CD4-positive, alpha-beta memory T cell (primary cell): ENCODE measurements at regions of chr6 and their contacts with region 1.

Region 1: DNA sequence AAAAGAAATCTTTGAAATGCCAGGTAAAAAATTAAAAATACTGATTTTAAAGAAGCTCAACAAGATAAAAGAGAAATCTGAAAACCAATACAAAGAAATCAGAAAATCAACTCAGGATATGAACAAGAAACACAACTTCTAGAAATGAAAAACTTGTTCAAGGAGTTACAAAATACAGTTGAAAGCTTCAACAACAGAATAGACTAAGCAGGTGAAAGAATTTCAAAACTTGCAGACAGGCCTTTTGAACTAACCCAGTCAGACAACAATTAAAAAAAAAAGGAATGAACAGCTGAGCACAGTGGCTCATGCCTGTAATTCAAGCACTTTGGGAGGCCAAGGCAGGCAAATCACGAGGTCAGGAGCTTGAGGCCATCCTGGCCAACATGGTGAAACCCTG is 57.8 kb downstream of the PDSS2 start:
- DNase-seq: no peak
- H3K4me3 ChIP-seq: no peak overlapping the region
- H3K4me3 Mint-ChIP-seq: no peak overlapping the region
- H3K27ac ChIP-seq: no peak overlapping the region
- H3K27ac Mint-ChIP-seq: no peak overlapping the region
- H3K4me1 ChIP-seq: no peaks in the 10 kb centered on the region
- H3K4me1 Mint-ChIP-seq: no peaks in the 10 kb centered on the region
- H3K27me3 ChIP-seq: no peaks in the 10 kb centered on the region
- H3K27me3 Mint-ChIP-seq: no peaks in the 10 kb centered on the region

Region 2: DNA sequence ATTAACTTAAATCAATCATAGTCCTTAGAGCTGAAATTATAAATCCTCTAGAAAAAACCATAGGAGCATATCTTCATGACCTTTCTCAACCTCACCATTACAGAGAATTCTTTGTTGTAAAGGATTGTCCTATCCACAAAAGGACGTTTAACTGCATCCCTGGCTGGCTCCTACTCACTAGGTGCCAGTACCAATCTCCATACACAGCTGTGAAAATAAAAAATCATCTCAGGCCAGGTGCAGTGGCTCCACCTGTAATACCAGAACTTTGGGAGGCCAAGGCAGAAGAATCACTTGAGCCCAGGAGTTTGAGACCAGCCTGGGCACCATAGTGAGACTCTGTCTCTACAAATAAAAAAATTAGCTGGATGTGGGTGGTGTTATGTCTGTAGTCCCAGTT is 32.1 kb before region 1 on chr6:
- CTCF ChIA-PET with region 1: no interaction called
- POLR2A ChIA-PET with region 1: no interaction called
- intact Hi-C with region 1: no loop called
- DNase-seq: no peak
- H3K4me3 ChIP-seq: no peak overlapping the region
- H3K4me3 Mint-ChIP-seq: no peak overlapping the region
- H3K27ac ChIP-seq: no peak overlapping the region
- H3K27ac Mint-ChIP-seq: peak overlapping the region in 2 of 7 donors; percentile 11
- H3K4me1 ChIP-seq: no peaks in the 10 kb centered on the region
- H3K4me1 Mint-ChIP-seq: peaks cover 0 to 2% (median 0%) of the 10 kb centered on the region in 4 donors
- H3K27me3 ChIP-seq: no peaks in the 10 kb centered on the region
- H3K27me3 Mint-ChIP-seq: no peaks in the 10 kb centered on the region

Region 3: GRCh38 chr6:107442938-107443607 is 41.5 kb after region 1 on chr6:
- CTCF ChIA-PET with region 1: no interaction called
- POLR2A ChIA-PET with region 1: no interaction called
- intact Hi-C with region 1: loop called (anchors 1 kb)
- DNase-seq: no peak
- H3K4me3 ChIP-seq: no peak overlapping the region
- H3K4me3 Mint-ChIP-seq: no peak overlapping the region
- H3K27ac ChIP-seq: no peak overlapping the region
- H3K27ac Mint-ChIP-seq: no peak overlapping the region
- H3K4me1 ChIP-seq: no peaks in the 10 kb centered on the region
- H3K4me1 Mint-ChIP-seq: peaks cover 12 to 25% (median 21%) of the 10 kb centered on the region in 4 donors
- H3K27me3 ChIP-seq: no peaks in the 10 kb centered on the region
- H3K27me3 Mint-ChIP-seq: no peaks in the 10 kb centered on the region